ENCODE measurements at regions of chr10 and their contacts with region 1.

Region 1: DNA sequence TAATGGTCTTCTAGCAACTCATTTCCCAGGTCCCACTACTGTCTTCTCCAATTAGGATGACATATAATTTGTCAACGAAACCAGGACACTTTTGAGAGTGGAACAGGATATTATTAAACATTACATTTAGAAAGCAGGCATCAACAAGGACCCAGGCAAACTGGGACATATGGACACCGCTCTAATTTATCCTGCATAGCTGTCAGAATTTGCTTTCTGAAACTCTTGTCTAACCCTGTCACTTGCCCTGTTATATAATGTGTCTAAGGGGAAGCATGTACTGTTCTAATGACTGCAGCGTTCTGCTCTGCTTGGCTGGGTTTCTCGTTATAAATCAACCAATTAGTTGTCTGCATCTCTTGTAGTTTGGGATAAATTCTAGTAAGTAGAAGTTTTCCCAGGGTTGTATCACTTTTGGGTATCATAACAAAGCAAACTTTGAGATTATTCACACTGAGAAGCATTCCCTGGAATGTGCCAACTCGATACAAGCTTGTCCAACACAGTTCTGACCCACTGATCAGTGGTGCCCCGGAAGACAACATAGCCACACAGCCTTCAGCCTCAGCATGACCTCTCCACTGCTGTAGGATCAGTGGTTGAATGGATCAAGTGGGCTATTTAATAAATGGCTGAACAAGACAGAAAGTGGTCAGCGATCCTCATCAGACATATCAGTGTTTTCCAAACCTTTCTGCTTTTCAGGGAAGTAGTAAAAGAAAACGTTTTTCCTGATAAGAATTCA is 228.1 kb downstream of the KIF20B start:
- DNase-seq: no peak
- H3K4me3 ChIP-seq: no peak overlapping the region
- H3K27ac ChIP-seq: no peak overlapping the region
- H3K4me1 ChIP-seq: peaks cover 3% of the 10 kb centered on the region
- H3K27me3 ChIP-seq: no peaks in the 10 kb centered on the region
- CTCF ChIP-seq: no peak

Region 2: DNA sequence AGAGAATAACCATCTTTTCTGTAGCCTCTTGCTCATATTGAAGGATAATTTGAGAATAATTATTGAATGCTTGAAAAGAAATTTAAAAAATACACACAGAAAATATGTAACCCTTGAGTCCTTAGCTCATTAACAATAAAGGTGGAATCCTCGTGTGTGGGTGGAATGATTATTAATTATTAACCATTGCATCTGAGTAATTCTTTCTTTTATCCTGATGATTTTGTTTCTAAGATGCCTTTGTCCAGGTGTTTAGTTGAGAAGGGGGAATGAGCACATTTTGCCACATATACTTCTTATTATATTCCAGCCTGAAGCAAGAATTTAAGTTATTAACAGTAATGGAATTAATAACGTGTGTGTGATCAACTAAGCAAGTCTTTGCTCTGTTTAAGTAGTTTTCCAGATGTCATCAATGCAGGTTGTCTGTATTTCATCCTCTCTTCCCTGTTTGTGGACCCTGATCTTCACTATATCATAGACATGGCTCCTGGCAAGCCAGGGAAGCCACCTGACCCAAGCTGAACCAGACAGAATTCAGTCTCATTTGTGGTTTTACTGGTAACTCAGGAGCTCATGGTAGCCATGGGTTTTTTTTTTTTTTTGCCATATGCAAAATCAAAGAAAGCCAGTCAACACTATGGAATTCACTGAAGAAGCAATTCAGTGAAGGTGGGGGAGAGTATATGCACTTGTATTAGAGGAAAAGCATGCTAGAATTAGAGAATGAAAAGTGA is 83.7 kb before region 1 on chr10:
- CTCF ChIA-PET with region 1: no interaction called
- dilution Hi-C with region 1: loop called (anchors 5 kb)
- in situ Hi-C with region 1: no loop called
- intact Hi-C with region 1: no loop called
- DNase-seq: peak; percentile 74
- H3K4me3 ChIP-seq: no peak overlapping the region
- H3K27ac ChIP-seq: no peak overlapping the region
- H3K4me1 ChIP-seq: peaks cover 11% of the 10 kb centered on the region
- H3K27me3 ChIP-seq: no peaks in the 10 kb centered on the region
- CTCF ChIP-seq: no peak

Measured in mammary epithelial cell (primary cell).